ENCODE measurements at regions of chr6 and their contacts with region 1.

Region 1: DNA sequence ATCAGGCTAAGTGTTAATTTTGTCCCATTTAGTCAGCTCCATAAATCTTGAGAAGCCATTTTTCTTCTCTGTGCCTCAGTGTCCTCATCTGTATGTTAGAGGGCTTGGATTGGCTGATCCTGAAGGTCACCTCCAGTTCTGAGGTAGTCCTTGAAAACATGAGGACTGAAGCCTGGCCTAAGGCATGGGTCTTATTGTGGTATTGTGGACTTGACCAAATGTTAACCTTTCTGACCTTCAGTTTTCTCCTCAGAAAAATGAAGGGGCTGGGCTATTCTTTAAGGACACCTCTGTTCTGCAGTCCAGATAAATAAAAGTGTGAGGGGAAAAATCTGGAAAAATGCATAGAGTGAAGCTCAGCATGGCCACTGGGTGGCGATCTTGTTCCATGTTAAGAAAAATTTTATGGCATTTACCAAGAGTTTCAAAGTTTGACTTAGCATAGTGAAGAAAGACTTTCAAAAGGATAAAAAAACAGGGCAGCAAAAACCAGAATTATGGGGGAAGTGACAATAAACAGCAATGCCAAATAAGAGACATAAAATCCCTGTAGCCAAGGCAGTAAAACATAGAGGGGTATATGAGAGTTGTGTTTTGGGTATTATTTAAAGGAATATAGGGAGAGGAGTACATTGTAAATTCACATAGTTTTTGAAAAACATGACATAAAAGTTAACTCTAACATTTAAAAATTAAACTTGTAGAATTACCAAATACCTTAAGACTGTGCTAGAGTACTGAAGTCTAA is 13.2 kb upstream of the TFB1M start:
- DNase-seq: peak; percentile 49 to 83 (median 61)
- H3K4me3 ChIP-seq: no peak overlapping the region
- H3K27ac ChIP-seq: no peak overlapping the region
- H3K4me1 ChIP-seq: no peaks in the 10 kb centered on the region
- H3K27me3 ChIP-seq: no peaks in the 10 kb centered on the region
- CTCF ChIP-seq: peak; percentile 79 to 96 (median 88)
- POLR2A ChIP-seq: no peak

Region 2: GRCh38 chr6:154909821-154910220 is 417.7 kb before region 1 on chr6:
- intact Hi-C with region 1: no loop called
- DNase-seq: peak in 2 of 7 donors; percentile 2 to 24
- H3K4me3 ChIP-seq: no peak overlapping the region
- H3K27ac ChIP-seq: no peak overlapping the region
- H3K4me1 ChIP-seq: no peaks in the 10 kb centered on the region
- H3K27me3 ChIP-seq: no peaks in the 10 kb centered on the region
- CTCF ChIP-seq: no peak
- POLR2A ChIP-seq: no peak

Region 3: DNA sequence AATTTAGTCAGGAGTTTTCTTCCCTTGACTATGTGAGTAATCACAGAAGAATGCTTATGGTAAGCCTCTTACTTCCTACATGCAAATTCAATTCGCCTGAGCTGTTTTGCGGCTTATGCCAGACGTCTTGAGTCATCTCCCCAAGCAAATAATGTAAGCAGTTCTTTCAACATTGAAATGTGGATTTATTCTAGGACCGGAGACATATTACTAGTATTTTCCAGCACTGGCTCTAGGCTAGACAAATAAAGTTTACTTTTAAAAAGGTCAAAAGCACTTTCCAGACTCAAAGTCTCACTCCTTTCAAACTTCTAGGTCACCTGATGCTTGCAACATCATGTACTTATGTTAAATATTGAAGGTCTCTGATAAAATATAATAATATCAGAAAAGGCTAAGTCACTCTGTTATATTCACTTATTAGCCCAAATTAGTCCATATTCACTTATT is 166.2 kb after region 1 on chr6:
- intact Hi-C with region 1: loop called in 1 of 2 experiments (anchors 10 kb)
- DNase-seq: peak; percentile 44 to 84 (median 77)
- H3K4me3 ChIP-seq: no peak overlapping the region
- H3K27ac ChIP-seq: peak overlapping the region; percentile 0 to 91 (median 87)
- H3K4me1 ChIP-seq: peaks cover 16 to 28% of the 10 kb centered on the region in 2 donors
- H3K27me3 ChIP-seq: no peaks in the 10 kb centered on the region
- CTCF ChIP-seq: no peak
- POLR2A ChIP-seq: peak in 1 of 2 donors; percentile 19

Region 4: DNA sequence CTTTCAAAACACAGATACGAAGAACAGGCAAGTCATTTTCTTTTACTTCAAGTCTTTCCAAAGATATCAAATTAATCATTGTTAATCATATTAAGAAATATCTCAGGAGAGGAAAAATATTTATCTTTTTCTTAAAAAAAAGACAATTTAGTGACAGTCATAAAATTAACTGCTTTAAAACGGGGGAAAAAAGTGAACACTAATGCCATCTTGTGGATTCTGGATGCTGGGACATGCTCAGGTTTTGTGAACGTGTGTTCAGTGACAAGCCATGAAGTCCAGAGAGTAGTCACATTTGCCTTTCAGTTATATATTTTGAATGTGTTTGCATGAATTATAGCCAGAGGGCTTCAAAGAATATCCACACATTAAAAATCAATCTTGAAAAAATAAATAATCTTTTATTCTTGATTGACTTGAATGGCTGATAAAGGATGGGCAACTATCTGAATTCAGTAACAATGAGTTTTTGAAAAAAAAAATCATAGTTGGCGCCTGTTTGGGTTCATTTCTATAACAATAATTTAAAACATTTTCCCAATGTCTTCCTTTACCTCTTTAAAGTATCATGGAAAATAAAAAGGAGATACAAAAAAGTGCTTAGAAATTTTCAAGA is 202.8 kb after region 1 on chr6:
- intact Hi-C with region 1: loop called (anchors 2 to 10 kb)
- DNase-seq: peak in 6 of 7 donors; percentile 21 to 69 (median 32)
- H3K4me3 ChIP-seq: no peak overlapping the region
- H3K27ac ChIP-seq: peak overlapping the region in 4 of 5 donors; percentile 60 to 86 (median 80)
- H3K4me1 ChIP-seq: peaks cover 16 to 21% of the 10 kb centered on the region in 2 donors
- H3K27me3 ChIP-seq: no peaks in the 10 kb centered on the region
- CTCF ChIP-seq: peak; percentile 48 to 85 (median 80)
- POLR2A ChIP-seq: no peak

Measured in adrenal gland (tissue), 19 donors.